PC-3 (cell line): ENCODE measurements at regions of chr11 and their contacts with region 1.

Region 1: GRCh38 chr11:46389450-46390253 is 1.9 kb downstream of the CHRM4 start:
- DNase-seq: peak; percentile 75
- ATAC-seq: peak; percentile 75
- H3K4me3 ChIP-seq: peak overlapping the region; percentile 69
- H3K27ac ChIP-seq: no peak overlapping the region
- H3K4me1 ChIP-seq: peaks cover 19% of the 10 kb centered on the region; the same call in 1 of the 2 replicates
- H3K27me3 ChIP-seq: peaks cover 29% of the 10 kb centered on the region
- CTCF ChIP-seq: peak; percentile 82

Region 2: DNA sequence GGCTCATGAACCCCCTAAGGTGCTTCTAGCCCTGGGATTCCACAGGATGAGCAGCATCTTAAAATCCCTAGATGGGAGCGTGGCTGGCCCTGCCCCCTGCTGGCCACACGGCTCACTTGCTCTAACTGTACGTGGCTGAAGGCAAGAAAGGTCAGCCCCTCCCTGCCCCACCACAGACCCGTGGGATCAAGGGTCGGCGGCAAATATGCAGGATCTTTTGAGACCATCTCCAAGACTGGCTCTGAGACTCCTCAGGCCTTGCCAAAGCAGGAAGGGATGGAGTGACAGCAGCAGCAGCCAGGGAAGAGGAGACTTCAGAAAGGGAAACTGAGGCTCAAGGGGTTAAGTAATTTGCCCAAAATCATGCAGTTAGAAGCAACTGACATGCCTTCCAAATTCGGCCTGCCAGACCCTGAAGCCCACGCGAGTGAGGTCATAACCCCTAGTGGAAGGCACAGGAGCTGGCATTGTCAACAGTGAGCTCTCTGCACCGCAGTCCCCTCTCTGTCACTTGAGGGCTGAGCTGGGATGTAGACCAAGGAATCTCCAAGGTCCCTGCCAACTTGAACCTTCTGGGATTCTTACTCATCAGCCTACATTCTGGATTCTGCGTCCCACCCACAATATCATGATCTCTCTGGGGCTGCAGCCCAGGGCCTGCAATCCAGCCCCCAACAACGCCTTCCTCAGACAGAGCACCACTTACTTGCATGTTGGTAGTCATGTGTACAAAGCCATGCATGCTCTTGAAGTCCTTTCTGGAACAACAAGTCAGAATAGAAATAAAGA is 80.8 kb before region 1 on chr11:
- CTCF ChIA-PET with region 1: interaction called, 11 read pairs
- POLR2A ChIA-PET with region 1: no interaction called
- intact Hi-C with region 1: no loop called
- DNase-seq: peak; percentile 70
- ATAC-seq: peak; percentile 79
- H3K4me3 ChIP-seq: no peak overlapping the region
- H3K27ac ChIP-seq: no peak overlapping the region
- H3K4me1 ChIP-seq: peaks cover 8% of the 10 kb centered on the region; the same call in 1 of the 2 replicates
- H3K27me3 ChIP-seq: no peaks in the 10 kb centered on the region
- CTCF ChIP-seq: peak; percentile 92

Region 3: GRCh38 chr11:46489661-46490560 is 100.3 kb after region 1 on chr11:
- CTCF ChIA-PET with region 1: interaction called, 10 read pairs
- POLR2A ChIA-PET with region 1: no interaction called
- intact Hi-C with region 1: no loop called
- DNase-seq: peak; percentile 59
- ATAC-seq: peak; percentile 95
- H3K4me3 ChIP-seq: no peak overlapping the region
- H3K27ac ChIP-seq: no peak overlapping the region
- H3K4me1 ChIP-seq: no peaks in the 10 kb centered on the region
- H3K27me3 ChIP-seq: no peaks in the 10 kb centered on the region
- CTCF ChIP-seq: peak; percentile 71

Region 4: DNA sequence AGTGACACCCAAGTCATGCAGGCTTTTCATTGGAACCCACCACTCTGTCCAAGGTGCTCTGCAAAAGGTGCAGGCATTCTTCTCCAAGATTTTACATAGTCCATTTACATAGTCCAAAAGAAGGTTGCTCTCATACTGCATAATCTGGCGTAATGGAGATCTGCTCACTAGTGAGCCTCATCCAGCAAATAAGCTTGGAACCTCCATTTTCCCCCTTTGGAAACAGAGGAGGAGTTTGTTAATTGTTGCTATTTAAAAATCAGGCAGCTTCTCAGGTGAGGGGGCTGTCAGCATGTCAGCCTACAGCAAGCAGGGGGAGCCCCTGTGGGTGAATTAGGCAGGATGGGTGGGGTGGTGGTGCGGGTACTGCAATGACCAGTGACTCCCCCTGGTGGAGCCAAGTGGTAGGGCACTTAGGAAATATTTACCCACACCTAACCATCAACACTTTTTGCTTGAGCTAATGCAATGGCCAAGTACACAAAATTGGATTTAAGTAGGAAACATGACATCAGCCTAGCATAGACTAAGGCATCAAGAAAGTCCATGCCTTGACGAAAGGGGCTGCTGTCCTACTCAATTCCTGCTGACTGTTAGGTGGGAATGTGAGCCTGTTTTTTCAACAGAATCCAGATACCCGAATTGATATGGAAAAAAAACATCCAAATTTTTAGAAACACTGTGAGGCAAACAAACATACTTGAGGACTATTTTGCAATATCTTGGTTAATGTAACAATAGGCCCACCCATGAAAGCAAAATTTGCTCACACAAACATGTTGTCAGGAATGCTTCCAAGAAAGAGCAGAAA is 139.6 kb after region 1 on chr11:
- CTCF ChIA-PET with region 1: interaction called, 8 read pairs
- POLR2A ChIA-PET with region 1: no interaction called
- intact Hi-C with region 1: loop called (anchors 2 kb)
- DNase-seq: peak; percentile 65
- ATAC-seq: peak; percentile 87
- H3K4me3 ChIP-seq: no peak overlapping the region
- H3K27ac ChIP-seq: no peak overlapping the region
- H3K4me1 ChIP-seq: no peaks in the 10 kb centered on the region
- H3K27me3 ChIP-seq: no peaks in the 10 kb centered on the region
- CTCF ChIP-seq: peak; percentile 86

Region 5: GRCh38 chr11:46537537-46538295 is 148.1 kb after region 1 on chr11:
- CTCF ChIA-PET with region 1: no interaction called
- POLR2A ChIA-PET with region 1: no interaction called
- intact Hi-C with region 1: loop called (anchors 1 kb)
- DNase-seq: peak; percentile 80
- ATAC-seq: peak; percentile 96
- H3K4me3 ChIP-seq: no peak overlapping the region
- H3K27ac ChIP-seq: no peak overlapping the region
- H3K4me1 ChIP-seq: no peaks in the 10 kb centered on the region
- H3K27me3 ChIP-seq: no peaks in the 10 kb centered on the region
- CTCF ChIP-seq: peak; percentile 92

Region 6: DNA sequence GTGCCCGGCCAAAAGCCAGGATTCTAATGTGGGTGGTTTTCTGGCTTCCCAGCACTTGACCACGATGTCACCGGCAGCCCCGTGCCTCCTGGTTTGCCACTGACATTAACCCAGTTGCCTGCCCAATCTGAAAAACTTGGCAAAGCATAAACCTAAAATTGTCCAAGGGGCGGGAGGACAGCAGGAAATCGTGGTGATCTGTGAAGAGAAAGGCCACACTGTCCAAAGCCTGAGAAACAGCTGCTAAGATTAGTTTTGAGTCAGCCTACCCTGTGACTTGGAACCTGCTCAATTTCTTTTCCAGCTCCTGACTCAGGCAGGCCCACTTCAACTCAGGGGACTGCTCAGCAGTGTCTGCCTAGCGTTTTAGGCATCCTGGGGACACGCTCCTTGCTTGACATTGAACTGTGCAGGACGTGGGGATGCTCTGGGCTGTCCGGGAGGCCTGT is 321.2 kb after region 1 on chr11:
- CTCF ChIA-PET with region 1: no interaction called
- POLR2A ChIA-PET with region 1: no interaction called
- intact Hi-C with region 1: no loop called
- DNase-seq: peak; percentile 43
- ATAC-seq: peak; percentile 85
- H3K4me3 ChIP-seq: no peak overlapping the region
- H3K27ac ChIP-seq: peak overlapping the region; percentile 28
- H3K4me1 ChIP-seq: peaks cover 12% of the 10 kb centered on the region
- H3K27me3 ChIP-seq: no peaks in the 10 kb centered on the region
- CTCF ChIP-seq: no peak